PC-9 (cell line): ENCODE measurements at regions of chr4 and their contacts with region 1.

Region 1: GRCh38 chr4:184792950-184793555 is 32.7 kb downstream of the ACSL1 start:
- DNase-seq: peak in 1 of 2 experiments; percentile 87
- H3K4me3 ChIP-seq: no peak overlapping the region
- H3K27ac ChIP-seq: peak overlapping the region; percentile 66
- H3K4me1 ChIP-seq: peaks cover 20% of the 10 kb centered on the region
- H3K27me3 ChIP-seq: no peaks in the 10 kb centered on the region
- CTCF ChIP-seq: no peak

Region 2: DNA sequence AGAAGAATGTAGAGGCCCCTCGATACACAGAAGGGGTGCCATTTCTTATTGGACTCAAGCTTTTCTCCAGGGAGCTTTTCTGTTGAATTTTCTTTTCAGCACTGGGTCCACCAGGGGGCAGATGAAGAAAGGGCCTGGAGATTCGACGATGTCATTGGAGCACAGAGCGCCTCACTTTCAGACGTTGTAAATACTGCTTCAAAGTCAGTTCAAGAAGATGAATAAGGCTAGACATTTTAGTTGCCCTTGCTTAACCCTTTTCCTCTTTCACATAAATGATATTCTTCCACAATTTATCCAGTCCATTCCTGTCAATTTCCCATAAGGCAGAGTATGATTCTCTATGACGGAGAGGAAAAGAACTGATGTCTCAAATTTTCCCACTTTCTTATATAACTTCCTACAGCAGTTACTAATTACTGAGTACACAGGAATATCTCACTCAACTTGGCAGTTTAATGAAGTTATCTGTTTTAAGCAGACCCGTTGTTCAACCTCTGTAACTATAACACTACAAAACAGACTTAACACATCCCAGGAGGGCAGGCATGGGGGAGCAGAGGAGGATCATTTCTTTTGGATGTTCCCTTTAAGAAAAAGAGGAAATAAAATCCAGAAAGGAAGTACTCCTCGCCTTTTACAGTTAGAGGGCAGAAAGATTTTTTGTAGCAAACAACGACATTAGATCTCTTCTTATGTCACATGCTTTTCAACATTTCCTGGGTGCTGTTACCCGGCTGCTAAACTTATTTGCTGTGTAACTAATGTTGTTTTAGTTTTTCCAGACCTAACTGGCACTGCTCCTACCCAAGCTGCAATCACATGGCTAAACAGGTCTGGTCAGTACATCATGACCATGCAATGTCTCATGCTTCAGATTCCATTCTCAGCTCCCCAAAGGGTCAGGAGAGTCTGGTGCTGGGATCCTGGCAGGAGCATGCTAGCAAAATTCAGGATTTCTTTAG is 46.9 kb before region 1 on chr4:
- CTCF ChIA-PET with region 1: no interaction called
- POLR2A ChIA-PET with region 1: no interaction called
- intact Hi-C with region 1: no loop called
- DNase-seq: peak; percentile 64 to 88
- H3K4me3 ChIP-seq: peak overlapping the region; percentile 36; the same call in 1 of the 2 replicates
- H3K27ac ChIP-seq: peak overlapping the region; percentile 98
- H3K4me1 ChIP-seq: peaks cover 42% of the 10 kb centered on the region
- H3K27me3 ChIP-seq: no peaks in the 10 kb centered on the region
- CTCF ChIP-seq: peak; percentile 76

Region 3: DNA sequence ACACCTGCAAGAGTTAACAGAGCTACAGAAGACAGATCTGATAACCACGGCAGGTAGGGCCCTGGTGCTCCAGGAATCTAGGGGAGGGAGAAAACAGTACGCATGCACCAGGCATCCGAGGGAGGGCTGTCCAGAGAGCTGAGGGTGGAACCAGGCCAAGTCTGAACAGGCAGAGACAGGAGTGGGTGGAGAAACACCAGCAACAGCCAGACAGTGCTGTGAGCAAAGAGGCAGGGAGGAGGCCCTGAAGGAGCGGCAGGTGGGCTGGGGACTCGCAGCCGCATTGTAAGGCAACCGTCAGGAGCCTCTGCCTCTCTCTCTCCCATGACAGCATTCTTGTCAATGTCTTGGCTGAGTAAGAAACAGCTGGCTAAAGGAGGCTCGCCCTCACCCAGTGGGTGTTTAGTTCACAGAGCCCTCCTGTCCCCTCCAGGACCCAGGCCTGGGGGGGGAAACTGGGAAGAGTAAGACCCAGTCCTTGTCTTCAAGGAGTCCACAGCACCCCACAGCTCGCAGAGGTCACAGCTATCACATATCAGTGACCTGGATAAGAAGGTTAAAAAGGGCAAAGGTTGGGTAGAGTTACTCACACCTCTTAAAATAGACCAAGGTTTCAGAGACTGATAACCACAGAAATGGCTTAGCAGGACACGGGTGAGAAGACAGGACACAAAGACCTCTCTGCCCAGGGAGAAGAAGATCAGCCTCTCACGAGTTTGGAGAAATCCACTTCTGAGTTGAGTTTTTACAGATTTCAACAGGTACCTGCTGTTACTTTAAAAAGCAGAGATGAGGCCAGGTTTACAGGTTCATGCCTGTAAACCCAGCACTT is 22.2 kb after region 1 on chr4:
- CTCF ChIA-PET with region 1: no interaction called
- POLR2A ChIA-PET with region 1: interaction called, 3 read pairs
- intact Hi-C with region 1: loop called (anchors 1 kb)
- DNase-seq: peak; percentile 87
- H3K4me3 ChIP-seq: peak overlapping the region; percentile 44
- H3K27ac ChIP-seq: peak overlapping the region; percentile 85
- H3K4me1 ChIP-seq: peaks cover 57% of the 10 kb centered on the region
- H3K27me3 ChIP-seq: no peaks in the 10 kb centered on the region
- CTCF ChIP-seq: no peak

Region 4: DNA sequence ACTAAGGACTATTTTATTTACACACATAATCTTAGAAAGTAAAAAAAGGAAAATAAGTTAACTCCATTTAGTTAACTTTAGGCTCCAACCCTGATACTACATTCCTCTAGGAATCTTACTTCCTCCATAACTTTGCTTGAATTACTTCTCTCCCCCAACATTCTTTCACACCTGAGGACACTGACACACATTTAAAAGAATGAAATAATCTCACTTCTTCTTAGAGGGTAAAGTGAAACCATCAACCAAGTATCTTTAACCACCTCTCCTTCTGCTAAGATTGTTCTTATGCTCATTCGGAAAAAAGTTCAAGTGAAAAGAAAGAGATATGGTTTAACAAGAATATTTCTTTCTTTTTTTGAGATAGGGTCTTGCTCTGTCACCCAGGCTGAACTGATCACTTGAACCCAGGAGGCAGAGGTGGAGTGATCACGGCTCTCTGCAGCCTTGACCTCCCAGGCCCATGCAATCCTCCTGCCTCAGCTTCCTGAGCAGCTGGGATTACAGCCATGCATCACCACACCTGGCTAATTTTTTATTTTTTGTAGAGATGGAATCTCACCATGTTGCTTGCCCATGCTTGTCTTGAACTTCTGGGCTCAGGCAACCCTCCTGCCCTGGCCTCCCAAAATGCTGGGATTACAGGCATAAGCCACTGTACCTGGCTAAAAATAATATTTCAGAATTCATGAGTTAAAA is 378.5 kb after region 1 on chr4:
- CTCF ChIA-PET with region 1: interaction called, 14 read pairs
- POLR2A ChIA-PET with region 1: no interaction called
- intact Hi-C with region 1: no loop called
- DNase-seq: no peak
- H3K4me3 ChIP-seq: no peak overlapping the region
- H3K27ac ChIP-seq: no peak overlapping the region
- H3K4me1 ChIP-seq: no peaks in the 10 kb centered on the region
- H3K27me3 ChIP-seq: no peaks in the 10 kb centered on the region
- CTCF ChIP-seq: no peak